RWPE1 (cell line): ENCODE measurements at regions of chr12 and their contacts with region 1.

Region 1: GRCh38 chr12:55188974-55189556 is 31.8 kb upstream of the OR10A7 start:
- DNase-seq: peak; percentile 53
- H3K27ac ChIP-seq: no peak overlapping the region
- CTCF ChIP-seq: peak; percentile 71

Region 2: GRCh38 chr12:55619354-55620138 is 430.5 kb after region 1 on chr12:
- CTCF ChIA-PET with region 1: interaction called, 21 read pairs
- POLR2A ChIA-PET with region 1: no interaction called
- DNase-seq: peak; percentile 89
- H3K27ac ChIP-seq: no peak overlapping the region
- CTCF ChIP-seq: peak; percentile 86